Activated CD4-positive, alpha-beta memory T cell treated with anti-CD3 and anti-CD28 coated beads for 36 hours (primary cell): ENCODE measurements at regions of chr1 and their contacts with region 1.

Region 1: DNA sequence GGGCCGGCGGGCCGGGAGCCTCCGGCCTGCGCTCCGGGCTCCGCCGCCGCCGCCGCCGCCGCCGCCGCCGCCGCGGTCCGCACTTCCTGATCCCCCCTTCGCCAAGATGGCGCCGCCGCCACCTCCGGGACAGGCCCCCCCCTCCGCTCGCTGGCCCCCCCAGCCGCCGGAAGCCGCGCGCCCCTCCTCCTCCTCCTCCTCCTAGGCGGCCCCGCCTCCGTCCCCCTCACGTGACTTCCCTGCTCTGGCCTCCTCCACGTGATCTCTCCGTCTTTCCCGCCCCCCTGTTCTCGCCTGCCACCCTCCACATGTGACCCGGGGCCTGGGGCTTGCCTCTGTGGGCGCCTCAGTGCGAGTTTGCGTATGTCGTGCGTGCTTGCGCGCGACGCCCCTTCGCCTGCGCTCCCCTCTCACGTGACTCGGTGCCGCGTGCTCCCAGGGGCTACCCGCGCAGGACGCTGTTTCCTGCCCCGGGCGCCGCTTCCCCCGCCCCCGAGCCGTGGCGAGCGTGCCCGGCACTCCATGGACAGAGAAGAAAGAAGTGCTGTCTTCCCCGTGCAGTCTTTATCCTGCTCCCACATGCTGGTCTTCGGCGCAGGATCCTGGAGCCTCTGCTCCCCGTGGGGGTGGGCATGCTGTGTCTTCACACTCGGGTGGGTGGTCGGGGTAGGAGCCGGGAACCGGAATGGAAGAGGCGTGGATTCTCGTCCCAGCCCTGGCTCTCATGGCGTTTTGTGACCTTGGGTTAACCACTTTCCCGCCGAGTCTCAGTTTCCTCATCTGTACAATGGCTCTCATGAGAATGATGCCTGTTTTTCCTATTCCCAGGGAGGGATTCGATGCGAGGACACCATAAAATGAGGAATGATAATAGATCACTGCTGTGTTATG is at the start of gene UBE2Q1:
- DNase-seq: peak; percentile 100
- H3K4me3 Mint-ChIP-seq: peak within 1 kb of the TSS; percentile 90
- H3K27ac Mint-ChIP-seq: peak within 1 kb of the TSS; percentile 94
- H3K4me1 Mint-ChIP-seq: peaks cover 26% of the 10 kb centered on the region
- H3K27me3 Mint-ChIP-seq: no peaks in the 10 kb centered on the region
- total RNA-seq, gene UBE2Q1: 82.5 to 86.2 TPM

Region 2: DNA sequence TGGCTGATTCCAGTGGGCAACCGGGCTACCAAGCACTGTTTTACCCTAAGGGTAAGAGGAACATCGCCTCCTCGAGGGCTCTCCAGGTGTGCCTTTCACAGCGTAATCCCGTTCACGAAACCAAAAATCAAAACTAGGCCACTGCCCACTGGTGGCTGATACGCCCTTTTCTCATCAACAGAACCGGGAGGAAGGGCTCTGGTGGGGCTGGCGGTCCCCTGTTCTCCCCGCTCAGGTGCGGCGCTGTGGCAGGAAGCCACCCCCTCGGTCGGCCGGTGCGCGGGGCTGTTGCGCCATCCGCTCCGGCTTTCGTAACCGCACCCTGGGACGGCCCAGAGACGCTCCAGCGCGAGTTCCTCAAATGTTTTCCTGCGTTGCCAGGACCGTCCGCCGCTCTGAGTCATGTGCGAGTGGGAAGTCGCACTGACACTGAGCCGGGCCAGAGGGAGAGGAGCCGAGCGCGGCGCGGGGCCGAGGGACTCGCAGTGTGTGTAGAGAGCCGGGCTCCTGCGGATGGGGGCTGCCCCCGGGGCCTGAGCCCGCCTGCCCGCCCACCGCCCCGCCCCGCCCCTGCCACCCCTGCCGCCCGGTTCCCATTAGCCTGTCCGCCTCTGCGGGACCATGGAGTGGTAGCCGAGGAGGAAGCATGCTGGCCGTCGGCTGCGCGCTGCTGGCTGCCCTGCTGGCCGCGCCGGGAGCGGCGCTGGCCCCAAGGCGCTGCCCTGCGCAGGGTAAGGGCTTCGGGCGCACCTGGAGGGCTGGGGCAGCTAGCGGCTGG is 153.6 kb before region 1 on chr1 and contains the start of gene IL6R:
- CTCF ChIA-PET with region 1: no interaction called
- POLR2A ChIA-PET with region 1: no interaction called
- intact Hi-C with region 1: loop called (anchors 2 kb)
- DNase-seq: peak; percentile 86
- H3K4me3 Mint-ChIP-seq: peak within 1 kb of the TSS; percentile 92
- H3K27ac Mint-ChIP-seq: peak within 1 kb of the TSS; percentile 93
- H3K4me1 Mint-ChIP-seq: peaks cover 82% of the 10 kb centered on the region
- H3K27me3 Mint-ChIP-seq: no peaks in the 10 kb centered on the region
- total RNA-seq, gene IL6R: 30.2 to 30.5 TPM

Region 3: GRCh38 chr1:154520333-154520732 is 38.5 kb before region 1 on chr1:
- CTCF ChIA-PET with region 1: no interaction called
- POLR2A ChIA-PET with region 1: no interaction called
- intact Hi-C with region 1: no loop called
- DNase-seq: no peak
- H3K4me3 Mint-ChIP-seq: no peak overlapping the region
- H3K27ac Mint-ChIP-seq: no peak overlapping the region
- H3K4me1 Mint-ChIP-seq: peaks cover 5% of the 10 kb centered on the region
- H3K27me3 Mint-ChIP-seq: peaks cover 12% of the 10 kb centered on the region

Region 4: DNA sequence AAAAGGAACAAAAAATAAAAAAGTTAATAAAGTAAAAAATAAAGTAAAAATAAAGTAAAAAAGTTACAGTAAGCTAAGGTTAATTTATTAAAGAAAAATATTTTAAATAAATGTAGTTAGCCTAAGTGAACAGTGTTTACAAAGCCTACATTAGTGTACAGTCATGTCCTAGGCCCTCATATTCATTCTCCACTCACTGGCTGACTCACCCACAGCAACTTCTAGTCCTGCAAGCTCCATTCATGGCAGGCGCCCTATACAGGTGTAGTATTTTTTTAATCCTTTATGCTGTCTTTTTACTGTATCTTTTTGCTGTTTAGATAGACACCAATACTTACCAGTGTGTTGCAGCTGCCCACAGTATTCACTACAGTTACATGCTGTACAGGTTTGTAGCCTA is 36.8 kb after region 1 on chr1:
- CTCF ChIA-PET with region 1: interaction called, 10 read pairs
- POLR2A ChIA-PET with region 1: no interaction called
- intact Hi-C with region 1: no loop called
- DNase-seq: no peak
- H3K4me3 Mint-ChIP-seq: no peak overlapping the region
- H3K27ac Mint-ChIP-seq: no peak overlapping the region
- H3K4me1 Mint-ChIP-seq: peaks cover 16% of the 10 kb centered on the region
- H3K27me3 Mint-ChIP-seq: no peaks in the 10 kb centered on the region

Region 5: DNA sequence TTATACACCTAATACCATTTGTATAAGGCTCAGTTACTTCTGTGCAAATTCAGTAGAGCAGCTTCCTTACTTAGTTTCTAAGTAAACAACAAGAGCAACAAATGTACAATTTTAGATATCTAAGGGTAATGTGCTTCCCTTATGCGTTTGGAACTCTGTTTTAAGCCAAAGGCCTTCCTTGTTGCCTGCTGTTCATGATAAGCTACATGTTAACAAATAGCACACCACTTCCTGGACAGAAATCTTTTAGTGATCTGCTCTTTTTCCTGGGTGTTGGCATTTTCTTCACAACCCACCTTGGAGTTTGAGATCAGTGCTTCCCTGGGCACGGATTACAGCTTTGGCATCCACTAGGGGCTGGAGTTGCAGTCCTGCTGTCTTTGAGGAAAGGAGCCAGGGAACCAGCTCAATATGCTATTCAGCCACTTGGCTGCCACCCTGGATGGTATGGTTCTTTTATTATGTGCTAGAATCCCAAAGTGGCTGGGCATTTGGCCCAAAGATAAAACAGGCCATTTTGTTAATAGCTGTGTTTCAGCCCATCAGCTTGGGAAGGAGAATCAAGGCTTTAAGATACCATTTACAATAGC is 104.7 kb after region 1 on chr1:
- CTCF ChIA-PET with region 1: interaction called, 31 read pairs
- POLR2A ChIA-PET with region 1: no interaction called
- intact Hi-C with region 1: no loop called
- DNase-seq: no peak
- H3K4me3 Mint-ChIP-seq: no peak overlapping the region
- H3K27ac Mint-ChIP-seq: no peak overlapping the region
- H3K4me1 Mint-ChIP-seq: no peaks in the 10 kb centered on the region
- H3K27me3 Mint-ChIP-seq: peaks cover 13% of the 10 kb centered on the region

Region 6: GRCh38 chr1:154760469-154760933 is 201.7 kb after region 1 on chr1:
- CTCF ChIA-PET with region 1: interaction called, 18 read pairs
- POLR2A ChIA-PET with region 1: no interaction called
- intact Hi-C with region 1: loop called (anchors 2 kb)
- DNase-seq: peak; percentile 86
- H3K4me3 Mint-ChIP-seq: peak overlapping the region; percentile 51
- H3K27ac Mint-ChIP-seq: peak overlapping the region; percentile 89
- H3K4me1 Mint-ChIP-seq: peaks cover 46% of the 10 kb centered on the region
- H3K27me3 Mint-ChIP-seq: peaks cover 2% of the 10 kb centered on the region

Region 7: DNA sequence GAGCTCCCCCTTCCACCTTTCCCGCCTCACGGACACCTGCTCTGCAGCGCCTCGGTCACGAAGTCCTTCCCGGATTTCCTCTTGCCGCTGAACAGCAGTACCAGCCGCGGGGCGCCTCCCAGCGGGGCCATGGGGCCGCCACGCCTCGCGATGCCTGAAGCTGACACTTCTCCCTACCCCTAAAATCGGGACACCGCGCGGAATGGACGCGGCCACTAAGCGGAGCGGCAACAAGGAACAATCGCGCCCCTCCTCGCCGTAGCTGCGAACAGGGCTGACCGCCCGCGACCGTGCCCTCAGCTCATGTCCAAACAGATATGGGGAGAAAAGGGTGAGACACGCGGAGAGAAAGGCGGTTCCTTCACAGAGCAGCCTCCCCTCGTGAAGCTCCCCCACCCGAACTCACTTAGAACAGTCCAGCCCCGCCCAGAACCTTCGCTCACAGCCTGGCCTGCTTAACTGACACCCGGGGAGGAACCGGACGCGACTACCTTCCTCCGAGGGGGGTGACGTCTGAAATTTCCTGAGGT is 377.8 kb after region 1 on chr1 and contains the start of gene PMVK:
- CTCF ChIA-PET with region 1: interaction called, 17 read pairs
- POLR2A ChIA-PET with region 1: no interaction called
- intact Hi-C with region 1: loop called (anchors 1 kb)
- DNase-seq: peak; percentile 96
- H3K4me3 Mint-ChIP-seq: peak within 1 kb of the TSS; percentile 90
- H3K27ac Mint-ChIP-seq: peak within 1 kb of the TSS; percentile 96
- H3K4me1 Mint-ChIP-seq: peaks cover 55% of the 10 kb centered on the region
- H3K27me3 Mint-ChIP-seq: no peaks in the 10 kb centered on the region
- total RNA-seq, gene PMVK: 51.2 to 54.0 TPM

Region 8: GRCh38 chr1:155084722-155085503 is 526.1 kb after region 1 on chr1:
- CTCF ChIA-PET with region 1: interaction called, 10 read pairs
- POLR2A ChIA-PET with region 1: no interaction called
- intact Hi-C with region 1: loop called (anchors 1 kb)
- DNase-seq: peak; percentile 94
- H3K4me3 Mint-ChIP-seq: peak overlapping the region; percentile 92
- H3K27ac Mint-ChIP-seq: peak overlapping the region; percentile 84
- H3K4me1 Mint-ChIP-seq: peaks cover 35% of the 10 kb centered on the region
- H3K27me3 Mint-ChIP-seq: peaks cover 31% of the 10 kb centered on the region